H1 (cell line): ENCODE measurements at regions of chr7 and their contacts with region 1.

Region 1: GRCh38 chr7:106056513-106057203 is 55.5 kb downstream of the SYPL1 start:
- DNase-seq: peak in 1 of 2 experiments; percentile 71
- H3K4me3 ChIP-seq: no peak overlapping the region
- H3K27ac ChIP-seq: no peak overlapping the region
- H3K4me1 ChIP-seq: peaks cover 0 to 5% (median 2%) of the 10 kb centered on the region in 4 experiments; a peak in 3 of 7 replicates
- H3K27me3 ChIP-seq: no peaks in the 10 kb centered on the region
- CTCF ChIP-seq: peak; percentile 83 to 95 (median 91)
- EP300 ChIP-seq: no peak
- POLR2A ChIP-seq: no peak
- RAD21 ChIP-seq: peak; percentile 88 to 92

Region 2: GRCh38 chr7:105916603-105917002 is 140.1 kb before region 1 on chr7:
- CTCF ChIA-PET with region 1: no interaction called
- POLR2A ChIA-PET with region 1: no interaction called
- DNase-seq: no peak
- H3K4me3 ChIP-seq: no peak overlapping the region
- H3K27ac ChIP-seq: no peak overlapping the region
- H3K4me1 ChIP-seq: no peaks in the 10 kb centered on the region
- H3K27me3 ChIP-seq: no peaks in the 10 kb centered on the region
- CTCF ChIP-seq: no peak
- EP300 ChIP-seq: no peak
- POLR2A ChIP-seq: no peak
- RAD21 ChIP-seq: no peak

Region 3: DNA sequence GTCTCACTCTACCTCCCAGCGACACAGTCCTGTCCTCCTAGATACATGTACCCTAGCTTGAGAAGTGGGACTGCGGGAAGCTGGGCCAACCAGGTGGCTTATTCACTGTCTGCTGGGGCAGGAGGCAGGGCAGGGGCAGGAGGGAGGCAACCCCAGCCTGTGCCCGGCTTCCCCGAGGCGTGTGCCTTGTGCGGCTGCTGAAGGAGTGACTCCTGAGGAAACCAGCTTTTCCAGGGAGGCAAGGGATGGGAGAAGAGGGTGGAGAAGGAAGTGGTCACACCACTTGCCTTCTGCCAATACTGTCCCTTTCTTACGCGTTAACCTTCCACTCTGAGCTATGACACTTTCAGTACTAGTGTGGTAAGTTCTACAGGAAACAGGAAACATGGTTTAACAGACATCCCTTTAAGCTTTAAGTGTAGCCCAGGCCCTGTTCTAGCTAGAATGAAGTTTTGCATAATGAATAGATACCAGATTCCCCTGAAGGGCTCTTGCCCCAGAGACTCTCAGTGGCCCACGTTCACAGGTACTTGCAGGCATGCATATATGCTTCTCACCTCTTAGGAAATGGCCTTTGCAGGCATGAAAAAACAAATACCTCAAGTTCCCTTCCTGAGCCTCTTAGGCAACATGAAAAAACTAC is 14.8 kb after region 1 on chr7:
- CTCF ChIA-PET with region 1: interaction called, 38 read pairs
- POLR2A ChIA-PET with region 1: no interaction called
- DNase-seq: no peak
- H3K4me3 ChIP-seq: no peak overlapping the region
- H3K27ac ChIP-seq: no peak overlapping the region
- H3K4me1 ChIP-seq: peaks cover 0 to 4% (median 2%) of the 10 kb centered on the region in 4 experiments; a peak in 1 of 7 replicates
- H3K27me3 ChIP-seq: no peaks in the 10 kb centered on the region
- CTCF ChIP-seq: no peak
- EP300 ChIP-seq: no peak
- POLR2A ChIP-seq: no peak
- RAD21 ChIP-seq: no peak

Region 4: DNA sequence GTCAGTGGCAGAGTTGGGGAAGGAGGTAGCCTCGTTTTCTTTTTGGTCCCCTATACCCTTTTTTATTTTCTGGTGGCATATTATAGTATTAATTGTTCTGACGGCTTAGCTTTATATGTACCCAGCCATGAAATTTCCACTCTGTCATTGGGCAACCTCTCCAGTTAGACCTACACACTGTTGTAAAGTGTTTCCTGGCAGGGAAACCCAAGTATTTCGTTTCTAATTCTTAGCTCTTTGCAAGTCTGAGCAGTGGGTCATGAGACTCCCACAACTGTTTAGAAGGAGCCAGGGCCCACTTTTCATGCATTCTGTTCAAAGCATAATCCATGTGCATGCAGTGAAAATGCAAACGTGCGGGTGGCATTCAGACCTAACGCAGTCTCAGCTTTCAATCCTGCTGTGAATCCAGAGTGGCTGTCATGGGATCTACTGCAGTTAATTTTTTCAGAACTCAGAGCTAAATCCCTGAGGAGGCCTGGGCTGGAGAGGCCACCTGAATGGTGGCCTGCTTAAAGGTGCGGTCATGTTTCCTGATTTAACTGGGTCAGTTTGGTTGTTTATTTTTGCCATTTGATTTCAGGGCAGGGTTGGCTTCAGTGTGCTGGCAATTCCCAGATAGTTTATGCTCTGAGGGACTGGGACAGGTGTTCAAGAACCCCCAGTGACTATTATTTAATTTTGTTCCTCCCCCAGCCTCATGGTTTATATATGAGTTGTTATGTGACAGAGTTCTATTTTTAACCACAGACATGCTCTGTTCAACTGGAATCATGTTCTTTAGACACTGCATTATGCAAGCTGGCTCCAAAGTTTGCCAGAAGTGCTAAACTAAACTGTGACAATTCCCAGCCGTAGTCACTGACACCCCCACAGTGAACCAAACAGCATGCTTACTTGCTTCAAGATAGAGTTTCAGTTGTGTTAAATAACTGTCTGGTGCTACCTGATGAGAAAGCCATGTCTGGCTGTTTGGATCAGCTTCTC is 82.9 kb after region 1 on chr7:
- CTCF ChIA-PET with region 1: interaction called, 12 read pairs
- POLR2A ChIA-PET with region 1: no interaction called
- DNase-seq: no peak
- H3K4me3 ChIP-seq: no peak overlapping the region
- H3K27ac ChIP-seq: no peak overlapping the region; the same call in 1 of the 2 replicates
- H3K4me1 ChIP-seq: peaks cover 0 to 4% (median 1%) of the 10 kb centered on the region in 4 experiments; a peak in 2 of 7 replicates
- H3K27me3 ChIP-seq: no peaks in the 10 kb centered on the region
- CTCF ChIP-seq: no peak
- EP300 ChIP-seq: no peak
- POLR2A ChIP-seq: peak in 1 of 2 experiments; percentile 37; a peak in 1 of 3 replicates
- RAD21 ChIP-seq: no peak

Region 5: GRCh38 chr7:106166655-106167342 is 110.1 kb after region 1 on chr7:
- CTCF ChIA-PET with region 1: interaction called, 19 read pairs
- POLR2A ChIA-PET with region 1: no interaction called
- DNase-seq: no peak
- H3K4me3 ChIP-seq: no peak overlapping the region
- H3K27ac ChIP-seq: no peak overlapping the region
- H3K4me1 ChIP-seq: no peaks in the 10 kb centered on the region
- H3K27me3 ChIP-seq: no peaks in the 10 kb centered on the region
- CTCF ChIP-seq: peak in 2 of 3 experiments; percentile 61 to 80; a peak in 2 of 4 replicates
- EP300 ChIP-seq: no peak
- POLR2A ChIP-seq: no peak
- RAD21 ChIP-seq: peak; percentile 81 to 82